ENCODE measurements at regions of chr12 and their contacts with region 1.

Region 1: GRCh38 chr12:120428597-120429229 is 9.2 kb upstream of the COX6A1 start:
- DNase-seq: peak; percentile 55
- H3K4me3 ChIP-seq: no peak overlapping the region
- H3K27ac ChIP-seq: peak overlapping the region; percentile 29 to 68 (median 63)
- H3K4me1 ChIP-seq: peaks cover 0 to 21% (median 10%) of the 10 kb centered on the region in 4 donors
- H3K27me3 ChIP-seq: no peaks in the 10 kb centered on the region
- CTCF ChIP-seq: no peak
- EP300 ChIP-seq: no peak
- POLR2A ChIP-seq: no peak

Region 2: GRCh38 chr12:120032242-120032641 is 396.5 kb before region 1 on chr12:
- in situ Hi-C with region 1: no loop called
- intact Hi-C with region 1: no loop called
- DNase-seq: no peak
- H3K4me3 ChIP-seq: no peak overlapping the region
- H3K27ac ChIP-seq: no peak overlapping the region
- H3K4me1 ChIP-seq: no peaks in the 10 kb centered on the region
- H3K27me3 ChIP-seq: no peaks in the 10 kb centered on the region
- CTCF ChIP-seq: no peak
- EP300 ChIP-seq: no peak
- POLR2A ChIP-seq: no peak

Region 3: DNA sequence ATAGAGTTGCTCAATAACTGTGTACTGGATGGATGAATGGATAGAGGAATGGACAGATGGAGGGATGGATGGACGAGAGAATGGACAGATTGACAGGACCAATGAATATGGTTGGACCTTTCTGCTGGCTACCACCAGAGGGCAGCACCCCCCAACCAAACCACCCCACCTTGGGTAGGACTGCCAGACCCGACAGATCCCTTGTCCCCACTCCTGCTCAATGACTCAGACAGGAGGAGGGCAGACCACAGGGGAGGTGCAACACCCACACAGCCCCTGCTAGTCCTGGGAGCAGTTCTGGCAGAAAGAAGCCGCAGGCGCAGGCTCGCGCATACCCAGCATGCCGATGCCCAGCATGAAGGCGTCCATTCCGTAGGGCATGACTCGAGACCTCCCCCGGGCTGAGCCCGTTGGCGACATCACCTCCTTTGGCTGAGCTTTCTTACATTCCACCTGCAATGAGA is 72.1 kb before region 1 on chr12:
- in situ Hi-C with region 1: loop called in 3 of 4 experiments (anchors 5 to 10 kb)
- intact Hi-C with region 1: loop called (anchors 5 kb)
- DNase-seq: peak; percentile 81
- H3K4me3 ChIP-seq: no peak overlapping the region
- H3K27ac ChIP-seq: no peak overlapping the region
- H3K4me1 ChIP-seq: peaks cover 0 to 4% (median under 1%) of the 10 kb centered on the region in 4 donors
- H3K27me3 ChIP-seq: no peaks in the 10 kb centered on the region
- CTCF ChIP-seq: peak; percentile 84 to 93 (median 85)
- EP300 ChIP-seq: no peak
- POLR2A ChIP-seq: no peak